ENCODE measurements at regions of chr5 and their contacts with region 1.

Region 1: GRCh38 chr5:61331407-61332357 is at the start of gene ZSWIM6:
- DNase-seq: peak; percentile 99
- ATAC-seq: peak; percentile 81
- H3K4me3 ChIP-seq: peak within 1 kb of the TSS; percentile 85 to 100 (median 98)
- H3K27ac ChIP-seq: peak within 1 kb of the TSS; percentile 90 to 94 (median 94)
- H3K4me1 ChIP-seq: peaks cover 7 to 14% of the 10 kb centered on the region in 2 donors
- H3K27me3 ChIP-seq: no peaks in the 10 kb centered on the region
- CTCF ChIP-seq: no peak
- POLR2A ChIP-seq: peak; percentile 95 to 97
- total RNA-seq, gene ZSWIM6: 1.9 to 4.0 (median 3.0) TPM

Region 2: DNA sequence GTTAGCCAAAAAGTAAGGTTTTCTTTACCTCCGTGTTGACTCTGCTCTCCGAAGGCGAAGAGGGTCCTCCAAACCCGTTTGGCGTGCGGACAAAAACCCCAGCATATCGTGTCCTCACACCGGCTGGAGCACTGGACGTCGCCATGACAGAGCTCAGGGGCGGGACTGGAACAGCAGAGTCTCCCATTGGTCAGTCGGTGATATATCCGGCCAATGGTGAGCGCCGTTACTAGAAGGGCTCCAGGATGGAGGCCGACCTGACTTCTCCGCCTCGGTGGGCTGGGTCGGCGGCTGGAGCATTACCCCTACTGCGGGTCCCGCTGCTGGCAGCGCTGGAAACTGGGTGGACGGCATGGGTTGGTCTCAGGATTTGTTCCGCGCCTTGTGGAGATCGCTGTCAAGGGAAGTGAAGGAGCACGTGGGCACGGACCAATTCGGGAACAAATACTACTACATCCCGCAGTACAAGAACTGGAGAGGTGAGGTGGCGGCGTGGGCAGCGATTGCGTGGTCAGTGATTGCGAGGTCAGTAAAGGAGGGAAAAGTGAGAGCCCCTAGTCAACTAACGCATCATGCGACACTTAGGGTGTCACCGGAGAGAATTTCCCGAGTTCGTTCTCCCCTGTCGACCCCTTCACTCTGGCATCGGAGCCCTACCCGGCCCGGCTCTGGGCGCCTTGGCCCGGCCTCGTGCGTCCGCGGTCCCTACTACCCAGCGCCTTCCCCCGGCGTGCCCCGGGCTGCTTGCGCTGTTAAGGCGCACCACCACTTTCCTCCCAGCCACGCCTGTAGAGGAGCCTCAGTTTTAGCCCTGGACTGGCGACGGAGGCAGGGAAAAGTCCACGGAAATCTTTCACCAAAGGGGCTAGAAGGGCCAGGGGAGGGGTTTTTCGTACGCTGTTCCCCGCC is 386.5 kb before region 1 on chr5 and contains the starts of genes ERCC8 and NDUFAF2:
- in situ Hi-C with region 1: loop called in 1 of 4 experiments (anchors 25 kb)
- intact Hi-C with region 1: no loop called
- DNase-seq: peak; percentile 91 to 92
- ATAC-seq: peak; percentile 97 to 98
- H3K4me3 ChIP-seq: peak within 1 kb of the TSS; percentile 76 to 88 (median 85)
- H3K27ac ChIP-seq: peak within 1 kb of the TSS; percentile 85 to 95 (median 90)
- H3K4me1 ChIP-seq: peaks cover 19 to 23% of the 10 kb centered on the region in 2 donors
- H3K27me3 ChIP-seq: no peaks in the 10 kb centered on the region
- CTCF ChIP-seq: no peak
- POLR2A ChIP-seq: peak; percentile 75 to 86
- total RNA-seq, gene ERCC8: 4.8 to 7.3 (median 5.6) TPM
- total RNA-seq, gene NDUFAF2: 25.8 to 54.3 (median 51.2) TPM

Region 3: GRCh38 chr5:61162010-61162831 is 169.5 kb before region 1 on chr5 and contains the start of gene SMIM15:
- in situ Hi-C with region 1: loop called in 3 of 4 experiments (anchors 10 to 25 kb)
- intact Hi-C with region 1: loop called (anchors 1 kb)
- DNase-seq: peak; percentile 75 to 85
- ATAC-seq: peak; percentile 94 to 96
- H3K4me3 ChIP-seq: peak within 1 kb of the TSS; percentile 87 to 99 (median 94)
- H3K27ac ChIP-seq: peak within 1 kb of the TSS; percentile 87 to 95 (median 93)
- H3K4me1 ChIP-seq: peaks cover 14 to 26% of the 10 kb centered on the region in 2 donors
- H3K27me3 ChIP-seq: no peaks in the 10 kb centered on the region
- CTCF ChIP-seq: no peak
- POLR2A ChIP-seq: peak; percentile 42 to 68
- total RNA-seq, gene SMIM15: 6.2 to 17.1 (median 10.4) TPM

Region 4: GRCh38 chr5:61290791-61291210 is 40.9 kb before region 1 on chr5:
- in situ Hi-C with region 1: no loop called
- intact Hi-C with region 1: no loop called
- DNase-seq: no peak
- ATAC-seq: no peak
- H3K4me3 ChIP-seq: no peak overlapping the region
- H3K27ac ChIP-seq: no peak overlapping the region
- H3K4me1 ChIP-seq: peaks cover 3% of the 10 kb centered on the region in 2 donors
- H3K27me3 ChIP-seq: no peaks in the 10 kb centered on the region
- CTCF ChIP-seq: no peak
- POLR2A ChIP-seq: no peak

Region 5: DNA sequence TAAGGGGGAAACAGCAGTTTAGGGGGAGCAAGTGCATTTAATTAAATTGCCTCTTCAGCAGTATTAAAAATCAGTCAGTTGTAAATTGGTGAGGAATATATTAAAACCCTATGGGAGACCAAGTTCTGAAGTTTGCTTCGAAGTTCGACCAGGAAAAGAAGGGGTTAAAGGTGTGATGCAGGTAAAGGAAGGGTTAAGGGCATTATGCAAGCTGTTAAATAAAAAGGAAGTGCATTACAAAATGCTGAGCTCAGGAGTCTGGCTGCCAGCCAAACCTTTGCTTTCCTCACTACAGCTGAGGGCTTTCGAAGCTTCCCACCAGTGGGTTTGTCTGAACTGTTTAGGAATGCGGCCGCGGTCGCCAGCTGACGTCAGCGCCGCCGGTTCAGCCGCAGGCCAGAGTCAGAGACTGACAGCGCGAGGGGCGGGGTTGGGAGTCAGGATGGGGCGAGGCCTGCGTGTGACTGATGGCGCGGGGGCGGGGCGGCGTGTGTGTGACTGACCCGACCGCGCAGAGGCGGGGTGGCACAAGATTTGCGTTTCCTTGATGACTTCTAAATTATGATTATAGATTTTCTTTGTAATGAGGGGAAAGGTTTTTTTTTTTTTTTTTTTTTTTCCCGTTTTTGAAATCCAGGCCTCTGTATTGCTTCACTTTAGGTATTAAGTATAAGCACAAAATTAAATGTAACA is 76.9 kb after region 1 on chr5:
- in situ Hi-C with region 1: loop called in 1 of 4 experiments (anchors 10 kb)
- intact Hi-C with region 1: loop called (anchors 1 kb)
- DNase-seq: peak; percentile 96 to 98
- ATAC-seq: peak; percentile 97 to 98
- H3K4me3 ChIP-seq: peak overlapping the region; percentile 35 to 41 (median 36)
- H3K27ac ChIP-seq: peak overlapping the region; percentile 44 to 66 (median 56)
- H3K4me1 ChIP-seq: peaks cover 10 to 18% of the 10 kb centered on the region in 2 donors
- H3K27me3 ChIP-seq: no peaks in the 10 kb centered on the region
- CTCF ChIP-seq: no peak
- POLR2A ChIP-seq: no peak

Region 6: DNA sequence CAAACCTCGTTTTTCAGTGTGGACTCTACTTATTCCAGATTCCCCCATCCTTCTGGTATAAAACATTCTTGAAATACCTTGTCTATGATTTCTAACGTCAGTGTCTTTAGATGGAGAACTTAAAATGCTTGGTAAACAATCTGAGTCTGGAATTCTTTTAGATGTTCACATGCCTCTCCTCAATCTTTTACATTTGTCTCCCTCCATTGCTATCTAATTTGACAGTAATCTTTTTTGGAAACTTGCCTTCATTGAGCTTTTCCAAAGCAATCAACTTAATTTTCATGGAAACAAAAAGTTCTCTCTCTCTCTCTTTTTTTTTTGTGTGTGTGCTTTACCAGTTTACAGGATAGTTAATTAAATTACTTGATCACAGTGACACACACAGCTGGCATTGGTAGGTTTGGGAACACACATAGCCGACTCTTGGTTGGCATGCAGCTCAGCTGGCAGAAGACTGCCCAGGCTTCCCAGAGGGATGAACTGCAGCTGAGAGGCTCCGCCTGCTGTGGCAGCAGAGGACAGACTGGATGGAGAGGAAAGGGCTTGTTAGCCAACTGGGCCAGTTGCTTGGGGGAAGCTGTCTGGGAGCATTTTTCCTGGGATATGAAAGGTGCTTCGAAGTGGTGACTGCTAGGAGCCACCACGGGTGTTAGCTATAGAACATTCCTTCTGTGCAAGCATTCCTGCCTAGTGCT is 271.7 kb after region 1 on chr5:
- in situ Hi-C with region 1: no loop called
- intact Hi-C with region 1: no loop called
- DNase-seq: no peak
- ATAC-seq: no peak
- H3K4me3 ChIP-seq: no peak overlapping the region
- H3K27ac ChIP-seq: no peak overlapping the region
- H3K4me1 ChIP-seq: no peaks in the 10 kb centered on the region
- H3K27me3 ChIP-seq: no peaks in the 10 kb centered on the region
- CTCF ChIP-seq: no peak
- POLR2A ChIP-seq: no peak

Region 7: DNA sequence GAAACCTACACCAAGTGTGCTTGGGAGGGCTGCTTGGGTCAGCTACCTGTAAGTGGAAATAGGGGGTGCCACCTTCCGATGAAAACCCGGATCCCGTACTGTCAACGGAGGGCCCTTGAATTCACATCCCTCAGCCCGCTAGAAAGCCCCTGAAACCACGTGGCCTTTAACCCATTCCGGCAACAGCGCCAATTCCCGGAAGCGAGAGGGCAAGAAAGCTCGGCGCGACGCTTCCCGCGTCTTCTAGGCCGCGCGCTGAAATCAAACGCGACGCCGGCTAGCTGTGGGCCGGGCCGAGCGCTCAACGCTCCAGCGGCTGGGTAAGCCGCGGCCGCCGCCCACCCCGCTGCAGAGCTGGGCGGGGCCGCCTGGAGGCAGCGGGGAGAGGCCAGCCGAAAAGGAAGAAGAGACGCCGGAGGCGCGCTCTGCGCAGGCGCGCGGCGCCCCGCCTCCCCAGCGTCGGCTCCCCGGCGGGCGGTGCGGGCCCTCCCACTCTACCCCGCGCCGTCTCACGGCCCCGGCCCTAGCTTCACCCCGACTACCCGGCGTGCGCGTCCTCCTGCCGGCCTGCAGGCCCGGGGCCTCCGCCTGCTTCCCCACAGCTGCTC is 974.1 kb after region 1 on chr5 and contains the start of gene KIF2A:
- in situ Hi-C with region 1: no loop called
- intact Hi-C with region 1: loop called (anchors 5 kb)
- DNase-seq: peak; percentile 68 to 84
- ATAC-seq: peak; percentile 93 to 94
- H3K4me3 ChIP-seq: peak within 1 kb of the TSS; percentile 84 to 98 (median 92)
- H3K27ac ChIP-seq: peak within 1 kb of the TSS; percentile 73 to 93 (median 89)
- H3K4me1 ChIP-seq: peaks cover 11 to 12% of the 10 kb centered on the region in 2 donors
- H3K27me3 ChIP-seq: no peaks in the 10 kb centered on the region
- CTCF ChIP-seq: peak in 2 of 5 experiments; percentile 27 to 44
- POLR2A ChIP-seq: peak; percentile 36 to 53
- total RNA-seq, gene KIF2A: 7.5 to 14.2 (median 11.8) TPM